Colonic mucosa (tissue), 4 donors: ENCODE measurements at regions of chr7 and their contacts with region 1.

Region 1: GRCh38 chr7:128387216-128388144 is 22.3 kb downstream of the IMPDH1 start:
- DNase-seq: peak; percentile 73
- H3K4me3 ChIP-seq: no peak overlapping the region
- H3K27ac ChIP-seq: no peak overlapping the region
- H3K4me1 ChIP-seq: no peaks in the 10 kb centered on the region
- H3K27me3 ChIP-seq: no peaks in the 10 kb centered on the region
- CTCF ChIP-seq: peak; percentile 77

Region 2: DNA sequence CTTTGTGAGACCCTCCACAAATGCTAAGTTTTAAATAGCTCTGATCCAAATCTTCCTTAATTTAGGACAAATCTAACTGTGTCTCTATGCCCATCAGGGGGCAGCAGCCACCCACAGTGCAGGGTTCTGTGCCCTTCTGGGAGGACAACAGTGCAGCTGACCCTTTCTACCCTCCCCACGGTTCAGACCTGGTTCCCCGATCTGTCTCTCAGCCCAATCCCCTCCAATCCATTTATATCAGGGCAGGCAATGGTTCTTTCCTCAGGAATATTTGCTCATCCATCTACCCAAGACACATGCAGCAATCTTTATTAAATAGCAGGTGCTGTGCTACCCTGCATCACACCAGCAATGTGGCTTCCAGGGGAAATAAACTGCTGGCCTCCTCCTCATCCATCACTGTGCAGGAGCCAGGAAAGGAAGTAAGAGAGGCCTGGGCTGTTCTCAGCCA is 39.8 kb before region 1 on chr7:
- intact Hi-C with region 1: loop called (anchors 2 kb)
- DNase-seq: no peak
- H3K4me3 ChIP-seq: no peak overlapping the region
- H3K27ac ChIP-seq: no peak overlapping the region
- H3K4me1 ChIP-seq: peaks cover 4% of the 10 kb centered on the region
- H3K27me3 ChIP-seq: peaks cover 17% of the 10 kb centered on the region
- CTCF ChIP-seq: peak; percentile 28

Region 3: DNA sequence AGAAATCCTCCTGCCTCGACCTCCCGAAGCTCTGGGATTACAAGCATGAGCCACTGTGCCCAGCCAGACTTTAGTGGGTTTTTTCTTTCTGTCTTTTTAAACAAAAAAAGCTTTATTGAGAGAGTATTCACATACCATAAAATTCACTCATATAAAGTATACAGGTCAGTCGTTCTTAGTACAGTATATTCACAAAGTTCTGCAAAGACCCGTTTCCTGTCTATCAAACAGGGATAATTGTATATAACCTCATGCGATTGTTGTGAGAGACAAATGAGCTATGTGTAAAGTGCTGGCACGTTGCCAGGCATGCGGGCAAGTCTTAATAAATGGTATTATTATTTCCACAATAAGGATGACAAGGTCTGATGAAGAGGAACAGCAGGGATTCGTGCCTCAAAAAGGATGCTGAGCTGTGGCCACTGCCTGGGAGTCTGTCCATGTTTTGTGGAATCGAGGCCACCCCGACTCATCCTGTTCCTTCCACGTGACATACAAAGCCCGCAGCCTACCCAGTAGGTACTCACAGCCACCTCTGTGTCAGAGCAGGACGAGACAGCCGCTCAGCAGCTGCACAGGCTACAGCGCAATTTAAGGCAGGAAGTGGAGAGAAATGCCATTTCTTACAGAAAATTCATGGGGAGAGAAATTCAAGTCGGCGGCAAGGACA is 1166.5 kb after region 1 on chr7:
- intact Hi-C with region 1: no loop called
- DNase-seq: no peak
- H3K4me3 ChIP-seq: no peak overlapping the region
- H3K27ac ChIP-seq: no peak overlapping the region
- H3K4me1 ChIP-seq: no peaks in the 10 kb centered on the region
- H3K27me3 ChIP-seq: no peaks in the 10 kb centered on the region
- CTCF ChIP-seq: no peak